ENCODE measurements at regions of chr3 and their contacts with region 1.

Region 1: GRCh38 chr3:142272200-142272891 is 47.0 kb upstream of the GK5 start:
- DNase-seq: no peak
- ATAC-seq: no peak

Region 2: DNA sequence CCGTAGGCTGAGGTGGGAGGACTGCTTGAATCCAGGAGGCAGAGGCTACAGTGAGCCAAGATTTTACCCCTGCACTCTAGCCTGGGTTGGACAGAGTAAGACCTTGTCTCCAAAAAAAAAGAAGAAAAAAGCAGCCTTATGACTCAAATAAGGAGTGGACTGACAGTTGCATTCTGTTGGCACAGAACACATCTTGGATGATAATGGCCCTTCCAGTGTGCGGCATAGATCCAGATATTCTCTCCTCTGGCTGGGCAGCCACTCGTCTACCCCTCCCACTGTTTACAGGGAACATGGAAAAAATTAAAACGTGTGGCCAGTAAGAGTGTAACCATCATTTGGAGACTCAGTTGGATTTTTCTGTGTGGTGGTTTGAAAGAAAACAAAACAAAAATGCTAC is 652.9 kb before region 1 on chr3:
- intact Hi-C with region 1: no loop called
- DNase-seq: no peak
- ATAC-seq: no peak

Region 3: DNA sequence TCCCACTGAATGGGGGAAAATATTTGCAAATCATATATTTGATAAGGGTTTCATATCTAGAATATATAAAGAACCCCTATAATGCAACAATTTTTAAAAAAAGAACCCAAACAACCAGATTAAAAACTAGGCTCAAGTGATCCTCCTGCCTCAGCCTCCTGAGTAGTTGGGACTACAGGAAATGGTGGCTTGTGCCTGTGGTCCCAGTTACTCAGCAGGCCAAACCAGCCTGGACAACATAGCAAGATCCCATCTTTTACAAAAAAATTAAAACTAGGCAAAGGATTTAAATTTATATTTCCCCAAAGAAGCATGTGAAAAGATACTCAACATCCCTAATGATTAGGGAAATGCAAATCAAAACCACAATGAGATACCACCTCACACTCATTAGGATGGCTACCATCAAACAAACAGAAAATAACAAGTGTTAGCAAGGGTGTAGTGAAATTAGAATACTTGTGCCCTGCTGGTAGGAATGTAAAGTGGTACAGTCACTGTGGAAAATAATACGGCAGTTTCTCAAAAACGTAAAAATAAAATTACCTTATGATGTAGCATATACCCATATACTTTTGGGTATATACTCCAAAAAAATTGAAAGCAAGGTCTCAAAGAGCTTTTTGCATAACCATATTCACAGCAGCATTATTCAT is 142.7 kb before region 1 on chr3:
- intact Hi-C with region 1: loop called (anchors 2 kb)
- DNase-seq: no peak
- ATAC-seq: no peak

Measured in Right ventricle myocardium inferior (tissue), 1 donor.